Heart left ventricle (tissue), 16 donors: ENCODE measurements at regions of chr14 and their contacts with region 1.

Region 1: DNA sequence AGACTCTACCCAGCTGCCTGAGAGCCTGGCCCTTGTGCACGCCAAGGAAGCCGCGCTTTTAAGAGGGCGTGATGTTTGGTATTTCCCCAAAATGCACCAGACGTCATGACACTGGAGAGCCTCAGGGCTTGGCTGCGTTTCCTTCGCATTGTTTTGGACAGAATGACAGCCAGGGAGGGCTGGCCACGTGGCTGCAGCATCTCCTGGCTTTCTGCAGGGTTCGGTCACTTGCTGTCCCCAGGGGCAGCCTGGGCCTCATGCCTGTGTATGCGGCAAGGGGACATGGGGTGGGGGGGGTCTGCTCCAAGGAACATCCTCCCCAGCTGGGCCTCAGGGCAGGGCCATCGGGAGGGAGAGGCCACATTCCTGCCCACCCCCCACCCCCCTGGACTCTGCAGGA is 16.2 kb upstream of the NUDT14 start:
- DNase-seq: peak; percentile 78 to 82 (median 81)
- ATAC-seq: peak; percentile 25 to 69 (median 28)
- H3K4me3 ChIP-seq: peak overlapping the region in 4 of 12 donors; percentile 29 to 36 (median 33)
- H3K27ac ChIP-seq: peak overlapping the region; percentile 70 to 97 (median 86)
- H3K4me1 ChIP-seq: peaks cover 10 to 97% (median 72%) of the 10 kb centered on the region in 12 donors
- H3K27me3 ChIP-seq: peaks cover 0 to 72% (median 28%) of the 10 kb centered on the region in 9 donors
- CTCF ChIP-seq: no peak
- POLR2A ChIP-seq: no peak

Region 2: DNA sequence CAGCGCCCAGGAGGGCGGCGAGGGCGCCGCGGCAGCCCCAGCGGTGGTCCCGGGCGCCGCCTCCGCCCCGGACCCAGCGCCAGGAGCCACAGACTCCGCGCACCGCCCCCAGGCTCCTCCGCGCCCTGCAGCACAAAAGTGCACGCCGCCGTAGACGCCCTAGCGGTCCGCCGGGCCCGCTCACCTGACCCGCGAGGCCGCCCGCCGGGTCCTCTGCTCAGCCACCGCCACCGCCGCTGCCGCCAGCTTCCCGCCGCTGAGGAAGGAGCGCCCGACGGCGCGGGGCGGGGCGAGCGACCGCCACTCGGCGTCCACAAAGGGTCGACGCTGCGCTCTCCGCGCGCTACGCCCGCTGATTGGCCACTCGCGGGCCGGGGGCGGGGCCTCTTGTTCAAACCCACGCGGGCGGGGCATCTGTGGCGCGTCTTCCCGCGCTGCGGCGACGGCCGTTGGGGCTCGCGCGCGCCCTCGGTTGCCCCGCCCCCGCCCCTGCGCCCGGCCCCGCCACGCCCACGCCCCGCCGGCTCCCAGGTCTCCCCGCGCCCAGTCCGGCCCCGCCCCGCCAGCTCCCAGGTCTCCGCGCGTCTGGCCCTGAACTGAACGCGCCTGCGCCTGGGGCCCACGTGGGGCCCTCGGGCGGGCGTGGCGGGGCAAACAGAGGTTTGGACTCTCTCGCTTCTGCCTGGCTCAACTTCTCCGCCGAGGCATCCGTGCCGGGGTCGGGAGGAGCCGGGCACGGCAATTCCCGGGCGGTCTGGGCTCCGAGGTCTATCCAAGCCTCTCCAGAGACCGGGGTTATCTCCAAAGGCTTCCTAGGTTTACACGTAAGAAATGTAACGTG is 176.2 kb before region 1 on chr14 and contains the start of gene CDCA4:
- intact Hi-C with region 1: no loop called
- DNase-seq: peak; percentile 97 to 99 (median 98)
- ATAC-seq: peak; percentile 97 to 98 (median 98)
- H3K4me3 ChIP-seq: peak within 1 kb of the TSS; percentile 52 to 96 (median 90)
- H3K27ac ChIP-seq: peak within 1 kb of the TSS; percentile 40 to 91 (median 82)
- H3K4me1 ChIP-seq: peaks cover 0 to 61% (median 20%) of the 10 kb centered on the region in 12 donors
- H3K27me3 ChIP-seq: no peaks in the 10 kb centered on the region
- CTCF ChIP-seq: peak in 1 of 12 donors; percentile 13
- POLR2A ChIP-seq: peak in 1 of 2 donors; percentile 74
- total RNA-seq, gene CDCA4: 1.4 to 6.0 (median 2.4) TPM

Region 3: DNA sequence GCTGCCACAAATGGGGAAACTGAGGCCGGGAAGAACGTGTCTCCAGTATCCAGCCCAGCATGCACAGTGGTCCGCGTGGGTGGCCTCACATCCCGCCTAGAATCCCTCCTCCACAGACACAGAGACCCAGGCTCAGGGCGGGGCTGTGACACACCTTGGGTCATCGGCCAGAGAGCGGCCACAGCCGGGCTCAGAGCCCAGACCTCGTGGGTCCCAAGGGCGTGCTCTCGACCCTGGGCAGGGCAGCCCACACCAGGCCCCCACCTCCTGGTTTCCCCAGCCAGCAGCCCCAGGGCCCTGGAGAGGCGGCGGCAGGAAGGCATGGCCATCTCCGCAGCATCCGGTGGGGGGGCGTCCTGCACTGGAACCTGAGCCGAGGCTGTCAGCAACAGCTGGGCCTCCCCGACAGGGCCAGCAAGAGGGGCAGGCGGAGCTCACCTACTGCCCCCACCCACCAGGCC is 44.0 kb before region 1 on chr14:
- intact Hi-C with region 1: loop called in 2 of 10 experiments (anchors 5 kb)
- DNase-seq: peak; percentile 77 to 83 (median 82)
- ATAC-seq: peak; percentile 67 to 90 (median 74)
- H3K4me3 ChIP-seq: no peak overlapping the region
- H3K27ac ChIP-seq: peak overlapping the region; percentile 48 to 88 (median 78)
- H3K4me1 ChIP-seq: peaks cover 6 to 43% (median 25%) of the 10 kb centered on the region in 12 donors
- H3K27me3 ChIP-seq: no peaks in the 10 kb centered on the region
- CTCF ChIP-seq: no peak
- POLR2A ChIP-seq: no peak

Region 4: DNA sequence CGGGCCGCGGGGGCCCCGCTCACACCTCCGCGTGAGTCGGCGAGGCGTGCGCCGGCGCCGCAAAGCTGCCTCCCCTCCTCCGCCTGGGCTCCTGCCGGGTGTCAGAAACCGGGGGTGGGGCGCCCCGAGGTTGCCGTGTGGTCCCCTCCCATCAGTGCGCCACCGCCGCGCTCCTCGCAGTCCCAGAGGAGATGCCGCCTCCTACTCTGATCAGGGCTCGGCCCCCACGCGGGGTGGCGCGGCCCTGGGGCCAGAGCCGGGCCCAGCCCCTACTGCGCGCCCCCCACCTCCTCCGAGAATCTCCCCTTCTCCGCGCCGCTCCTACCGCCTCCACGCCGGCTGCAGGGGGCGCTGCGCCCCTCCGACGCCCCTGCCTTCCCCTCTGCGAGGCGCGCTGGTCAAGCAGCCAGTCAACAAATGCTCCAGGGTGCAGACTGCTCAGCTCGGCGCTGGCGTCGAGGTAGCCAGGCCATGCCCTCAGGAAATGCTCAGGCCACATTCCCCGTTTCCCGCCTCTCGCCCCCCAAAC is 28.2 kb before region 1 on chr14:
- intact Hi-C with region 1: loop called in 1 of 10 experiments (anchors 2 kb)
- DNase-seq: peak in 4 of 5 donors; percentile 59 to 78 (median 66)
- ATAC-seq: peak in 3 of 4 donors; percentile 11 to 24 (median 23)
- H3K4me3 ChIP-seq: peak overlapping the region in 11 of 12 donors; percentile 7 to 70 (median 46)
- H3K27ac ChIP-seq: peak overlapping the region in 10 of 12 donors; percentile 39 to 82 (median 68)
- H3K4me1 ChIP-seq: peaks cover 14 to 59% (median 38%) of the 10 kb centered on the region in 12 donors
- H3K27me3 ChIP-seq: peaks cover 0 to 36% (median 0%) of the 10 kb centered on the region in 9 donors
- CTCF ChIP-seq: peak in 11 of 12 donors; percentile 40 to 73 (median 51)
- POLR2A ChIP-seq: no peak

Region 5: GRCh38 chr14:105337966-105338741 is 140.9 kb after region 1 on chr14:
- intact Hi-C with region 1: no loop called
- DNase-seq: peak in 4 of 5 donors; percentile 65 to 84 (median 72)
- ATAC-seq: peak; percentile 63 to 84 (median 70)
- H3K4me3 ChIP-seq: peak overlapping the region in 1 of 12 donors; percentile 3
- H3K27ac ChIP-seq: peak overlapping the region in 11 of 12 donors; percentile 23 to 85 (median 66)
- H3K4me1 ChIP-seq: peaks cover 5 to 94% (median 58%) of the 10 kb centered on the region in 12 donors
- H3K27me3 ChIP-seq: no peaks in the 10 kb centered on the region
- CTCF ChIP-seq: no peak
- POLR2A ChIP-seq: no peak

Region 6: GRCh38 chr14:105456736-105457617 is 259.7 kb after region 1 on chr14:
- intact Hi-C with region 1: no loop called
- DNase-seq: peak in 2 of 5 donors; percentile 21 to 47
- ATAC-seq: peak in 2 of 4 donors; percentile 3 to 6
- H3K4me3 ChIP-seq: no peak overlapping the region
- H3K27ac ChIP-seq: no peak overlapping the region
- H3K4me1 ChIP-seq: peaks cover 0 to 3% (median 0%) of the 10 kb centered on the region in 12 donors
- H3K27me3 ChIP-seq: no peaks in the 10 kb centered on the region
- CTCF ChIP-seq: no peak
- POLR2A ChIP-seq: no peak

Region 7: GRCh38 chr14:105473677-105474482 is 276.6 kb after region 1 on chr14:
- intact Hi-C with region 1: loop called in 1 of 10 experiments (anchors 2 kb)
- DNase-seq: peak; percentile 97 to 99 (median 98)
- ATAC-seq: peak; percentile 19 to 53 (median 50)
- H3K4me3 ChIP-seq: peak overlapping the region; percentile 43 to 100 (median 71)
- H3K27ac ChIP-seq: peak overlapping the region; percentile 87 to 100 (median 97)
- H3K4me1 ChIP-seq: peaks cover 0 to 80% (median 60%) of the 10 kb centered on the region in 12 donors
- H3K27me3 ChIP-seq: peaks cover 0 to 26% (median 0%) of the 10 kb centered on the region in 9 donors
- CTCF ChIP-seq: no peak
- POLR2A ChIP-seq: peak in 1 of 2 donors; percentile 39